B cell (primary cell): ENCODE measurements at regions of chr1 and their contacts with region 1.

Region 1: GRCh38 chr1:161399257-161399998 is 31.8 kb upstream of the CFAP126 start:
- DNase-seq: peak; percentile 97
- ATAC-seq: peak; percentile 76
- H3K4me3 ChIP-seq: peak overlapping the region; percentile 76 to 96 (median 86)
- H3K4me3 Mint-ChIP-seq: peak overlapping the region; percentile 100
- H3K27ac ChIP-seq: peak overlapping the region; percentile 97 to 100
- H3K27ac Mint-ChIP-seq: peak overlapping the region; percentile 100
- H3K4me1 ChIP-seq: peaks cover 13 to 20% of the 10 kb centered on the region in 2 donors
- H3K4me1 Mint-ChIP-seq: peaks cover 28% of the 10 kb centered on the region
- H3K27me3 ChIP-seq: no peaks in the 10 kb centered on the region
- H3K27me3 Mint-ChIP-seq: no peaks in the 10 kb centered on the region
- CTCF ChIP-seq: peak; percentile 86

Region 2: GRCh38 chr1:161420763-161421455 is 21.5 kb after region 1 on chr1:
- CTCF ChIA-PET with region 1: no interaction called
- POLR2A ChIA-PET with region 1: no interaction called
- intact Hi-C with region 1: loop called (anchors 1 kb)
- DNase-seq: no peak
- ATAC-seq: no peak
- H3K4me3 ChIP-seq: peak overlapping the region in 3 of 5 experiments; percentile 50 to 70 (median 61)
- H3K4me3 Mint-ChIP-seq: peak overlapping the region; percentile 45
- H3K27ac ChIP-seq: no peak overlapping the region
- H3K27ac Mint-ChIP-seq: no peak overlapping the region
- H3K4me1 ChIP-seq: peaks cover 0 to 4% of the 10 kb centered on the region in 2 donors
- H3K4me1 Mint-ChIP-seq: peaks cover 6% of the 10 kb centered on the region
- H3K27me3 ChIP-seq: peaks cover 0 to 5% (median 0%) of the 10 kb centered on the region in 4 experiments
- H3K27me3 Mint-ChIP-seq: no peaks in the 10 kb centered on the region
- CTCF ChIP-seq: no peak

Region 3: DNA sequence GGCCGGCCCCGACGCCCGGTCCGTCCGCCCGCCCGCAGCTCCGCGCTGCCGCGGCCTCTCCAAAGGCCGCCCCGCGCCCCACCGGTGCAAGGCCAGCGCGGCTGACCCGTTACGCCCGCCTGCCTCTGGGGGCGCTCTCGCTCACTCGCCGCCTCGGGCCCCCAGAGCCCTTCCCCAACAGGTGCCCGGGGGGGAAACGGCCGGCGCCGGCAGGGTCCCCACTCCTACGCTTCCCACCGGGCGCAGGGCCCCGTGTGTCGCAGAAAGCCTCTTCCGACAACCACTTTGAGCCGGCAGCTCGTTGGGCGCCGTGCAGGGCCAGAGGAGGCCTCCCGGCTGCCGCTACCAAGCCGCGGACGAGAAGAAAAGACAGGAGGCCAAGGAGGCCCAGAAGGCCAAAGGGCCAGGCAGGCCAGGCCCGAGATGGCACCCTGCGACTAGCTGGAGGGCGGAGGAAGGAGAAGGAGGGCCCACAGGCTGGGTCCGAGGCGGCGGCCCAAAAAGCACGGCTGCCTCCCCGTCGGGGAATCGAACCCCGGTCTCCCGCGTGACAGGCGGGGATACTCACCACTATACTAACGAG is 41.0 kb after region 1 on chr1:
- CTCF ChIA-PET with region 1: interaction called, 14 read pairs
- POLR2A ChIA-PET with region 1: no interaction called
- intact Hi-C with region 1: loop called (anchors 10 kb)
- DNase-seq: peak; percentile 82
- ATAC-seq: peak; percentile 63
- H3K4me3 ChIP-seq: peak overlapping the region in 4 of 5 experiments; percentile 61 to 82 (median 74)
- H3K4me3 Mint-ChIP-seq: peak overlapping the region; percentile 91
- H3K27ac ChIP-seq: peak overlapping the region in 1 of 2 donors; percentile 59
- H3K27ac Mint-ChIP-seq: peak overlapping the region; percentile 87
- H3K4me1 ChIP-seq: peaks cover 7 to 8% of the 10 kb centered on the region in 2 donors
- H3K4me1 Mint-ChIP-seq: peaks cover 12% of the 10 kb centered on the region
- H3K27me3 ChIP-seq: peaks cover 2 to 32% (median 13%) of the 10 kb centered on the region in 4 experiments
- H3K27me3 Mint-ChIP-seq: peaks cover 30% of the 10 kb centered on the region
- CTCF ChIP-seq: peak; percentile 69

Region 4: GRCh38 chr1:161473363-161473762 is 73.9 kb after region 1 on chr1:
- CTCF ChIA-PET with region 1: no interaction called
- POLR2A ChIA-PET with region 1: no interaction called
- intact Hi-C with region 1: no loop called
- DNase-seq: no peak
- ATAC-seq: no peak
- H3K4me3 ChIP-seq: no peak overlapping the region
- H3K4me3 Mint-ChIP-seq: peak overlapping the region; percentile 80
- H3K27ac ChIP-seq: no peak overlapping the region
- H3K27ac Mint-ChIP-seq: no peak overlapping the region
- H3K4me1 ChIP-seq: peaks cover 11% of the 10 kb centered on the region in 2 donors
- H3K4me1 Mint-ChIP-seq: peaks cover 12% of the 10 kb centered on the region
- H3K27me3 ChIP-seq: peaks cover 0 to 30% (median 10%) of the 10 kb centered on the region in 4 experiments
- H3K27me3 Mint-ChIP-seq: peaks cover 36% of the 10 kb centered on the region
- CTCF ChIP-seq: no peak